Right ventricle myocardium superior (tissue), 1 donor: ENCODE measurements at regions of chr6 and their contacts with region 1.

Region 1: GRCh38 chr6:160930547-160931377 is 60.8 kb upstream of the MAP3K4 start:
- DNase-seq: peak; percentile 82
- ATAC-seq: peak; percentile 97

Region 2: DNA sequence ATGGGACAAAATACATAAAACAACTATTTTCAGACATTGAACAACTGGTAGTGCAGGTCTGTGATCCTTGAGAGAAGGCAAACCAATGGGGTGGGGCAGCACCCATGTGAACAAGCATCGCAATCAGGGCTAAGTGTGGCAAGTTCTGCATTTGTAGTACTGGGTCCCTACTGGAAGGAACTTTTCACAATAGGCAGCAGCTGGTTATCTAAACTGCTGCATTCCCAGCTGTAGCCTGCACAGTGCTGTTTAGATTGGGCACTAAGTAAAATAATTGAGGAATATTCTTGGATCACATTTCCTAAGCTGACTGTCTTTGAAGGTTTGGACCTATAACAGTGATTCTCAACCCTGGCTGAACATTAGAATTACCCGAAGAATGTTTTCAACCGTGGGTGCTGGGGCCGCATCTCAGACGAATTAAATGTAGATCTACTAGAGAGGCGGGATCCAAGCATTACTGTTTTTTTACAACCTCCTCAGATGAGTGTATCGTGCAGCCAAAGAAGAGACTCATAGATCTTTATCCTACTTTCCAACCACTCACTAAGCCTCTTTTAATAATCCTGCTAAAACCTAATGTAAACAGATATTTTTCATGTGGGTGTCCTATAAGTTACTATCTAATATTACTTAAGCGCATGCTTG is 48.4 kb after region 1 on chr6:
- intact Hi-C with region 1: no loop called
- DNase-seq: no peak
- ATAC-seq: no peak

Region 3: GRCh38 chr6:160992061-160992979 is 61.6 kb after region 1 on chr6:
- intact Hi-C with region 1: loop called (anchors 5 kb)
- DNase-seq: peak; percentile 59
- ATAC-seq: peak; percentile 67

Region 4: DNA sequence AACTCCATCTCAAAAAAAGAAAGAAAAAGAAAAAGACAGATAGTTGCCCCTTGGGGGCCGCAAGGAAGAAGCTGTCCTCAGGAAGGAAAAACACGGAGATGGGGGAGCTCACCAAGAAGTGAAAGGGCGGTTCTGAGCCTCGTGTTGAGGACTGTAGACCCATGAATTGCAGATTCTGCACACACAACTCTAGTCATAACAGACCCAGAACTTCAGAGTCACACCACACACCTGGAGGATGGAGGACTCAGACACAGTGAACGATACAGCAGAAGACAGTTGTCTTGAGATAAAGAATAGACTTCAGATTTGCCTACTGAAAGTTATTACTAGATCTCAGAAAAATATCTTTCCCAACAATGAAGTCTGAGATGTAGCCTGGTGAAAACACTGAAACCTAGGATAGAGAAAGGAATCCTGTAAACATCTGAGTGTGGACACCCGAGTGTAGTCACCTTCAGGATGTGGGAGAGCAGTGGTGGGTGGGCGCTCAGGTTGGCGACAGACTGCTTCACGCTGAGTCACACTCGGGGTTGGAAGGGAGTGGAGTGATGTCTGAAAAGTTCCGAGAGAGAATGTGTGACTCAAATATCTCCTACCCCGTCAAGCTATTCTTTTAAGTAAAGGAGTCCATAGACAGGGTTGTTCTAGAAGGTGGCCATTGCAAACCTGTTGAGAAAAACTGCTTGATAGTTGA is 149.0 kb after region 1 on chr6:
- intact Hi-C with region 1: loop called (anchors 10 kb)
- DNase-seq: no peak
- ATAC-seq: no peak